ENCODE measurements at regions of chr3 and their contacts with region 1.

Region 1: GRCh38 chr3:128680602-128681368 is 30.2 kb upstream of the RPN1 start:
- DNase-seq: peak; percentile 99
- H3K4me3 ChIP-seq: peak overlapping the region; percentile 54 to 78 (median 62)
- H3K27ac ChIP-seq: peak overlapping the region; percentile 86 to 95 (median 92)
- H3K4me1 ChIP-seq: peaks cover 0 to 6% (median 3%) of the 10 kb centered on the region in 4 donors
- H3K27me3 ChIP-seq: no peaks in the 10 kb centered on the region
- CTCF ChIP-seq: peak; percentile 95 to 100 (median 99)
- EP300 ChIP-seq: peak in 1 of 4 donors; percentile 15
- POLR2A ChIP-seq: peak; percentile 79 to 89

Region 2: GRCh38 chr3:128456776-128457715 is 223.7 kb before region 1 on chr3:
- intact Hi-C with region 1: no loop called
- DNase-seq: no peak
- H3K4me3 ChIP-seq: no peak overlapping the region
- H3K27ac ChIP-seq: no peak overlapping the region
- H3K4me1 ChIP-seq: no peaks in the 10 kb centered on the region
- H3K27me3 ChIP-seq: peaks cover 0 to 38% (median 0%) of the 10 kb centered on the region in 3 donors
- CTCF ChIP-seq: no peak
- EP300 ChIP-seq: no peak
- POLR2A ChIP-seq: no peak

Region 3: DNA sequence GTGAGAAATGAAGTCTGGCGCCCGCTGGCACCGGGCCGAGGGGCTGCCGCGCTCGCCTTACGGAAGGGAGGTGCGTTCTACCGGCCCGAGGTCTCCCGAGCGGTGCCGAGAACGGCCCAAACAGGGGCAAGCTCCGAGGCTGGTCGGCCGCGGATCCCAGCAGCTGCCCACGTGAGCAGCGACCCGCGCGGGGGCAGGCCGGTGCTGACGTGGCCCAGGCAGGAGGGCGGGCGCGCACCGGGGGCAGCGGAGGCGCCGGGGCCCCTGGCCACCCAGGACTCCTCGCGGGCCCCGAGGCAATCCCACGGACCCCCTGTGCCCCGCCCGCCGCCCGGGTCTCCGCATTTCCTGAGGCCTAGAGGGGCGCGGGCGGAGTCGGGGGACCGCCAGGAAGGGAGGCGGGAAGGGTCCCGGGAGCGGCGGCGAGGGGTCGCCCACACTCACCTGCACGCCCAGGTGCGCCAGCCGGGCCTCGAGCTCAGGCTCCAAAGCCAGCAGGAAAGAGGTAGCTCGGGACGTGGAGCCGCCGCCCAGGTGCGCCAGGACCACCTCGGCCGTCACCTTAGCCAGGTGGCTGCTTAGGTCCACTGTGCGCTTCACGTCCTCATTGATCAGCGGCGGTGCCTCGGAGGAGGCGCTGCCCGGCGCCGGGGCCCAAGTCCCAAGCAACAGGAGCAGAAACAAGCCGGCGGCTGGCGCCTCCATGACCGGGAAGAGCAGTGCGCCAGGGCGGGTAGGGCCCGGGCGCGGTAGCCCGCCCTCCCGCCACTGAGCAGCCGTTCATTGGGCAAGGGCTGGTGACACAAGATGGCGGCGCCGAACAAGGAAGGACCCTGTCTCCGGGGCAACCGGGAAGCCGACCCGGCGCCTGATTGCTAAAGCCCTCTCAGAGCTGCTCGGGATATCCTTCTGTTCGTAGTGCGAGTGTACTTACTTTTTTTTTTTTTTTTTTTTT is 30.4 kb before region 1 on chr3 and contains the start of gene RPN1:
- intact Hi-C with region 1: loop called (anchors 1 kb)
- DNase-seq: peak; percentile 99
- H3K4me3 ChIP-seq: peak within 1 kb of the TSS; percentile 94 to 100 (median 97)
- H3K27ac ChIP-seq: peak within 1 kb of the TSS; percentile 96 to 100 (median 100)
- H3K4me1 ChIP-seq: peaks cover 0 to 23% (median 17%) of the 10 kb centered on the region in 4 donors
- H3K27me3 ChIP-seq: no peaks in the 10 kb centered on the region
- CTCF ChIP-seq: no peak
- EP300 ChIP-seq: no peak
- POLR2A ChIP-seq: peak; percentile 69 to 72
- total RNA-seq, gene RPN1: 115 to 158 (median 143) TPM

Region 4: DNA sequence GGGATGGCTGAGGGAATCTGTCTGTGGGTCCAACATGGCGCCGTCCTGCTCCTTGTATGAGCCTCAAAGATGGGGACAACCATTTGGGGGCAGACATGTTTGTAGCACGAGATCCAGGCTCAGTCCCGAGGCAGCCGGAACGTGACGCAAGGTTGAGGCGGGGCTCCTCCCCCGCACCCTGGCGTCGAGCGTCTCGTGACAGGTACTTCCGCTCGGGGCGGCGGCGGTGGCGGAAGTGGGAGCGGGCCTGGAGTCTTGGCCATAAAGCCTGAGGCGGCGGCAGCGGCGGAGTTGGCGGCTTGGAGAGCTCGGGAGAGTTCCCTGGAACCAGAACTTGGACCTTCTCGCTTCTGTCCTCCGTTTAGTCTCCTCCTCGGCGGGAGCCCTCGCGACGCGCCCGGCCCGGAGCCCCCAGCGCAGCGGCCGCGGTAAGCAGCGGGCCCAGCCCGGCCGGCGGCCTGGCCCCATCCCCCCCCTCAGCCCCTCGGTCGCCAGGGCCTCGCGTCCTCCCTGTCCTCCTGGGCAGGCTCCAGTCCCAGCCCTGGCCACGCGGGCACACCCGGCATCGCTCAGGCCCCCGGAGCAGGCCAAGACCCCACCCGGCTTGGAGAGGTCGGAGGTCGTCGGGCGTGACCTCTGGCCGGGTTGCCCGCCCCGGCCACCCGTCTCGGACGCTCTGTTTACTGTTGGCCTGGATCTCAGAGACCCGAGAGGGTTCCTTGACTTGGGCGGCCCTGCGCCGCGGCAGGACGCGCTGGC is 45.3 kb after region 1 on chr3 and contains the start of gene RAB7A:
- intact Hi-C with region 1: loop called (anchors 1 kb)
- DNase-seq: peak; percentile 99
- H3K4me3 ChIP-seq: peak within 1 kb of the TSS; percentile 80 to 99 (median 94)
- H3K27ac ChIP-seq: peak within 1 kb of the TSS; percentile 93 to 99 (median 98)
- H3K4me1 ChIP-seq: peaks cover 0 to 43% (median 38%) of the 10 kb centered on the region in 4 donors
- H3K27me3 ChIP-seq: no peaks in the 10 kb centered on the region
- CTCF ChIP-seq: no peak
- EP300 ChIP-seq: peak; percentile 43 to 99 (median 81)
- POLR2A ChIP-seq: peak; percentile 87 to 95
- total RNA-seq, gene RAB7A: 73.6 to 100.0 (median 86.8) TPM

Region 5: GRCh38 chr3:128845778-128846485 is 165.1 kb after region 1 on chr3:
- intact Hi-C with region 1: loop called (anchors 2 kb)
- DNase-seq: peak; percentile 90
- H3K4me3 ChIP-seq: peak overlapping the region; percentile 19 to 52 (median 45)
- H3K27ac ChIP-seq: peak overlapping the region; percentile 59 to 75 (median 70)
- H3K4me1 ChIP-seq: peaks cover 0 to 16% (median 14%) of the 10 kb centered on the region in 4 donors
- H3K27me3 ChIP-seq: no peaks in the 10 kb centered on the region
- CTCF ChIP-seq: peak; percentile 53 to 72 (median 60)
- EP300 ChIP-seq: no peak
- POLR2A ChIP-seq: no peak

Measured in sigmoid colon (tissue), 7 donors.